Ovary (tissue), 10 donors: ENCODE measurements at regions of chr1 and their contacts with region 1.

Region 1: GRCh38 chr1:64839732-64840405 is 95.0 kb downstream of the RAVER2 start:
- DNase-seq: peak in 1 of 5 donors; percentile 19
- H3K4me3 ChIP-seq: no peak overlapping the region
- H3K27ac ChIP-seq: no peak overlapping the region
- H3K4me1 ChIP-seq: peaks cover 2% of the 10 kb centered on the region
- H3K27me3 ChIP-seq: no peaks in the 10 kb centered on the region
- CTCF ChIP-seq: no peak
- EP300 ChIP-seq: no peak
- POLR2A ChIP-seq: no peak

Region 2: DNA sequence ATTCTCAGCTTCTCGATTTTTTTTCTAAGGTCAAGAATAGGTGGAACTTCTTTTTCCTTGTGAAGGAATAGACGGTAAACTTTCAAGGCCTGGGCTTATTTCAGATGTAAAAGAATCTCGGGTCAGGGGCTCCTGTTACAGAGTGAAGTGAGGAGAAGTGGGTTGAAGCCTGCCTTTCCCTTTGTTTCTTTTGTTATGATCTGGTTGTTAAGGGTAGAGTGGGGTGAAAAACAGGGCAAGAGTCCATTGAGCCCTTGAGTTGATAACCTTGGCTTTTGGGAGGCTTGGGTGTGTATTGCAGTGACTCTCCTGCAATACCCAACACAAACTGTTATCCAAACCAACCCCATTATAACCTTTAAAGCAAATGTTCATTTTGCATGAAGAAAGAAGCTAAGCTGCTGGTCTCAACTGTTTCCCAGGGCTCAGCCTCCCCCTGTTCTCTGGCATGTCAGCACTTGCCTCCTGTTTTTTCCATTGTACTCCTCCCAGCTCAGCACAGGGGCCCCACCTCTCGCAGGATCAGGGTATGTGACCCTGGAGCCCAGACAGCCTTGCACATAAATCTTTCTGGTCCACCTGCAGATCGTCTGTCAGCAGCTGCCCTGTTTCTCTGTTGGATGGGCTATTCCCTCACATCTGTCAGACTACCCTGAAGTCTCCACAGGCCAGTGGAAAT is 267.5 kb before region 1 on chr1:
- intact Hi-C with region 1: no loop called
- DNase-seq: no peak
- H3K4me3 ChIP-seq: no peak overlapping the region
- H3K27ac ChIP-seq: no peak overlapping the region
- H3K4me1 ChIP-seq: peaks cover 6% of the 10 kb centered on the region
- H3K27me3 ChIP-seq: no peaks in the 10 kb centered on the region
- CTCF ChIP-seq: no peak
- EP300 ChIP-seq: no peak
- POLR2A ChIP-seq: no peak

Region 3: GRCh38 chr1:65213271-65214023 is 373.6 kb after region 1 on chr1:
- intact Hi-C with region 1: loop called in 1 of 4 experiments (anchors 10 kb)
- DNase-seq: no peak
- H3K4me3 ChIP-seq: no peak overlapping the region
- H3K27ac ChIP-seq: no peak overlapping the region
- H3K4me1 ChIP-seq: no peaks in the 10 kb centered on the region
- H3K27me3 ChIP-seq: no peaks in the 10 kb centered on the region
- CTCF ChIP-seq: no peak
- EP300 ChIP-seq: no peak
- POLR2A ChIP-seq: no peak